HEK293 (cell line): ENCODE measurements at regions of chr22 and their contacts with region 1.

Region 1: GRCh38 chr22:36065775-36066559 is 37.3 kb upstream of the RBFOX2 start:
- H3K4me3 ChIP-seq: peak overlapping the region; percentile 57
- H3K27ac ChIP-seq: peak overlapping the region; percentile 64
- H3K4me1 ChIP-seq: no peaks in the 10 kb centered on the region
- CTCF ChIP-seq: peak; percentile 100

Region 2: DNA sequence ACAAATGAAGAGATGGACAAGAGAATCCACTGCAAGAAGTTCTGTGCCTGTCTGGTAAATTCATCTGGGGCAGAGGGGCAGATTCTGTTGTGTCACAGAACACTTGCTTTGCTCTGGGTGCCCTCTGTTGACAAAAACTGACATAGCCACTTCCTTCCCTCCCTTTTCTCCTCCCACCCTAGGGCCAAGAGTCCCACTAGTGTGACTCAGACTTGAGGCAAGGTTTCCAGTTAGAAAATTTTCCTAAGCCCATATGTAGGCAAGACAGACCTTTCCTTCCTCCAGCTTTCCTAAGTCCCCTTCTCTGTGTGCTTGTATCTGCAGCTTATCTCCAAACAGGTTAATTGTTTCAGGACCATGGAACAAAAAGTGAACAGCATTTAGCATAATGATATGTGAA is 144.2 kb before region 1 on chr22:
- CTCF ChIA-PET with region 1: interaction called, 127 read pairs
- POLR2A ChIA-PET with region 1: interaction called, 3 read pairs
- H3K4me3 ChIP-seq: no peak overlapping the region
- H3K27ac ChIP-seq: no peak overlapping the region
- H3K4me1 ChIP-seq: no peaks in the 10 kb centered on the region
- CTCF ChIP-seq: peak; percentile 69; the same call in 1 of the 2 replicates

Region 3: DNA sequence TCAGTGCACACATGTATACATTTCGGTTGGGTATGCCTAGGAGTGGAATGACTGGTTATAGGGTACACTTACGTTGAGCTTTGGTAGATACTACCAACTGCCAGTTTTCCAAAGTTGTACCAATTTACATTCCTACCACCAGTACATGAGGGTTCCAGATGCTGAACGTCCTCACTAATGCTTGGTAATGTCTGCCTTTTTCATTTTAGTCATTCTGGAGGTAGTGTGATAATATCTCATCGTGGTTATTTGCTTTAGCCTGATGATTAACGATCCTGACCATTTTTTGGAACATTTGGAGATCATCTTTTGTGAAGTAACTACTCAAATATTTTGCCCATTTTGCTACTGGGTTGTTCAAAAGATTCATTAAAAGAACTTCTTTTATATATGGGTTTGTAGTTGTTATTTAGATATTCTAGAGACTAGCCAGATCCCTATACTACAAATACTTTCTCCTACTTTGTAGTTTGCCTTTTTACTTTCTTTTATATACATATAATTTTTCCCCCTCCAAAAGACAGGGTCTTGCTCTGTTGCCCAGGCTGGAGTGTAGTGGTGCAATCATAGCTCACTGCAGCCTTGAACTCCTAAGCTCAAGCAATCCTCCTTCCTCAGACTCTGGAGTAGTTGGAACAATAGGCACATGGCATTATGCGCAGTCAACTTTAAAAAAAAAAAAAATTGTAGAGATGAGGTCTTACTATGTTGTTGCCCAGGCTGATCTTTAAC is 99.5 kb before region 1 on chr22:
- CTCF ChIA-PET with region 1: interaction called, 34 read pairs
- POLR2A ChIA-PET with region 1: interaction called, 4 read pairs
- H3K4me3 ChIP-seq: no peak overlapping the region
- H3K27ac ChIP-seq: no peak overlapping the region
- H3K4me1 ChIP-seq: peaks cover 14% of the 10 kb centered on the region
- CTCF ChIP-seq: no peak

Region 4: DNA sequence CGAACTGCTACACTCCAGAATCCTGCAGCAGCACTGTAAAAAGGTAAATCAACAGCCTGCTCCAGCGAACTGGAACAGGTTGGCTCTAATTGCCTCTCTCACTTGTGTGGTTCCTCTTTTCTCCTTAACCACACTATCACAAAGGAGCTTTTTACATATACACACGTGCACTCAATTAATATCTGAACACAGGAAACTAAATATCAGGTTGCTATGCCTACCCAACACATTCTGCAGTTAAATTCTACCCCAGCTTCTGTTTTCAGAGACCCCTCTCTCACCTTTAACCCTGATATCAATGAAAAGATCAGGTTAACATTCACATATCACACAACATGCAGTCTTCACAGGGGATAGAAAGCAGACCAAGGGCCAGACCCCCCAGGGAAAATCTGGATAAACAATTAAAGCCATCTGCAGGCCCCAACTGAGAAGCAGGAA is 48.3 kb before region 1 on chr22:
- CTCF ChIA-PET with region 1: interaction called, 65 read pairs
- POLR2A ChIA-PET with region 1: interaction called, 5 read pairs
- H3K4me3 ChIP-seq: no peak overlapping the region
- H3K27ac ChIP-seq: no peak overlapping the region
- H3K4me1 ChIP-seq: peaks cover 18% of the 10 kb centered on the region
- CTCF ChIP-seq: no peak

Region 5: DNA sequence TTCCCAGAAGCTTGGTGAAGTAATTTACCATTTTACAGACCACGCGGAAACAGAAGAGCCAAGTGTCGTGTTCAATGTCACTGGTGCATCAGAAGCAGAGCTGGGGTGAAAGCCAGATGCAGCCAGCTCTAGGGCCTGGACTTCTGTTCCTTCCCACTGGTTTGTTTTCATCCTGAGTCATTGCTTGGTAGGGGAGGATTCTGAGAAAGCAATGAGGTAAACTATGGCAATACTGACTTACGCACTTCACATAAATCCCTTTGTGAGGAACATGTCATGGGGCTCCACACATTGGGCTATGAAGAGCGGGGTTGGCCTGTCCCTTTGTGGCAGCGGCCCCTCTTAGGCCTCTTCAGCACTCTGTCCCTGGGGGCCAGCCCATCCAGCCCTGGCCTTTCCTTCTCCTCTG is 15.1 kb after region 1 on chr22:
- CTCF ChIA-PET with region 1: interaction called, 87 read pairs
- POLR2A ChIA-PET with region 1: interaction called, 4 read pairs
- H3K4me3 ChIP-seq: no peak overlapping the region
- H3K27ac ChIP-seq: no peak overlapping the region
- H3K4me1 ChIP-seq: no peaks in the 10 kb centered on the region
- CTCF ChIP-seq: no peak

Region 6: GRCh38 chr22:36144886-36145541 is 79.0 kb after region 1 on chr22:
- CTCF ChIA-PET with region 1: interaction called, 12 read pairs
- POLR2A ChIA-PET with region 1: no interaction called
- H3K4me3 ChIP-seq: no peak overlapping the region
- H3K27ac ChIP-seq: no peak overlapping the region
- H3K4me1 ChIP-seq: no peaks in the 10 kb centered on the region
- CTCF ChIP-seq: peak; percentile 63